ENCODE measurements at regions of chr17 and their contacts with region 1.

Region 1: DNA sequence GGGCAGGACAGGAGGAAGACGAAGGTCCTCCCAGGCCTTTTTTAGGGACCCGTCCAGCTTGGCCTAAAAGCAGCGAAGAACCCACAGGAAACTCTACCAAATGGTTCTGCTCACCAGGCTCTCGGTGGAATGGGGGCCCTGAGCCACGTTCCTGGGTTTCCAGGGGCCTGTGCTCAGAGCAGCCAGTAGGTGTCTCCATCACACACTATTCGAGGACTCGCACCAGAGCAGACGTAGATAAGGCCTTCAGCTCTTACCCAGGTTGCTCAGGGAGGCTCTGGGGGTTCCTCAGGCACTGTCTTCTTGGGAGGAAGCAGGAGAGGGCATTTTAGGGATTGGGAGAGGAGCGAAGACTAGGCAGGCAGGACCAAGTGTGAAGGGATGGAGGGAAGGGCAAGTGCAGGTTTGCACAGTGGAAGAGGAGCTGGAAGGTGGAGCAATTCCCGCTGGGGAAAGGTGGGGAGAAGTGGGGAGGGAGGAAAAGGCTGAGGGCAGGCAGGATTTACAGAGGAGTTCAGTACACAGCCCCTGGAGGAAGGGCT is 157.1 kb downstream of the RGS9 start:
- DNase-seq: no peak

Region 2: GRCh38 chr17:65340401-65340800 is 46.2 kb after region 1 on chr17:
- intact Hi-C with region 1: loop called in 1 of 2 experiments (anchors 2 kb)
- DNase-seq: no peak

Region 3: GRCh38 chr17:66177048-66177447 is 882.8 kb after region 1 on chr17:
- intact Hi-C with region 1: loop called in 1 of 2 experiments (anchors 10 kb)
- DNase-seq: no peak